ENCODE measurements at regions of chr1 and their contacts with region 1.

Region 1: DNA sequence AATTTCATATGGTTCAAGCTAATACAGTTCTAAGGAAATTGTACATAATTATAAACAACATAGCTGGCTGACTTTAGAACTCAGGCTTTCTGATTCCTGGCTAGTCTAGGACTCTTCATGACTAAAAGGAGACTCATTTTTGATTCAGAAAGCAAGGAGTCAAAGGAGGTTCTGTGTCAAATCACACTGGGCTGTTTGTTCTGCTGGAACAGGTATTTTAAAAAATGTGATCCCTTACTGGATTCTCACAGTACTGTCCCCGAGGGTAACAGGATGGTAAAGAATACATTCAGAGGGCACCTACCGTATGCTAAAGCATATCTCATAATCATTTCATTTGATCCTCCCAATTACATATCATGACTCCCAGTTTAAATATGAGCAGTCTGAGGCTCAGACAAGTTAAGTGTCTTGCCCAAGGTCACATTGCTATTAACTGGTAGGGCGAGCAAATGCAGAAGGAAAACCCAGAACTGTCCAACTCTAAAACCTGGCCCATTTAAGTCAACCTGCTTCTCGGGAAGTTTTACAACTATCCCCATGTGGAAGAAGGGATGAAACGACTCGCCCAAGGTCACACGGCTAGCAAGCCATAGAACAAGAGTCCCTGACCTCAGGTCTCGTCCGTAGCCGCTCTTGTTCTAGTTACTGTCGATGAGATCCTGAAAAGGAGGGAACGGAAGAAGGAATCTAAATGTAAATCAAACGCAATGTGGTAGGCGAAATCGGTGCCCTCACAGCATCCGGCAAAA is 675 bp downstream of the MYSM1 start:
- DNase-seq: no peak
- H3K4me3 ChIP-seq: peak overlapping the region; percentile 59 to 100 (median 97)
- H3K27ac ChIP-seq: peak overlapping the region; percentile 90
- H3K4me1 ChIP-seq: peaks cover 5 to 12% (median 9%) of the 10 kb centered on the region in 4 experiments
- H3K27me3 ChIP-seq: no peaks in the 10 kb centered on the region
- CTCF ChIP-seq: no peak
- EP300 ChIP-seq: no peak
- POLR2A ChIP-seq: no peak
- RAD21 ChIP-seq: no peak

Region 2: DNA sequence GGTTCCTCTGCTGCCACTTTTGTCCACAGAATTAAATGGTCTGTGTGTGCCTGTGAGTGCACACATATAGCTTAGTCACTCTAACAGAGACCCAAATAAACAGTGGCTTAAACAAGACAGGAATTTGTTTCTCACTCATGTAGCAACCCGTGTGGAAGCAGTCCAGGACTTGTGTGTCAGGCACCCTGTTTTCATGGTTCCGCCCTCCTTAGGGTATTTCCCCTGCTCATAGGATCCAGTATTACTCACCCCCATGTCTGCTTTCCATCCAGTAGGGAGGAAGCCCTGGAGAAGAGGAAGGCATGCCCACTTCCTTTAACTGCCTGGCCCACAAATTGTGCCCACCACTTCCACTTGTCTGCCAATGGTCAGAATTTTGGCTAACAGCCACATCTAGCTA is 80.9 kb before region 1 on chr1:
- CTCF ChIA-PET with region 1: no interaction called
- POLR2A ChIA-PET with region 1: no interaction called
- DNase-seq: no peak
- H3K4me3 ChIP-seq: no peak overlapping the region
- H3K27ac ChIP-seq: no peak overlapping the region
- H3K4me1 ChIP-seq: peaks cover 0 to 11% (median 3%) of the 10 kb centered on the region in 4 experiments; a peak in 5 of 7 replicates
- H3K27me3 ChIP-seq: no peaks in the 10 kb centered on the region
- CTCF ChIP-seq: no peak
- EP300 ChIP-seq: no peak
- POLR2A ChIP-seq: no peak
- RAD21 ChIP-seq: no peak

Region 3: GRCh38 chr1:58687516-58687915 is 11.7 kb before region 1 on chr1:
- CTCF ChIA-PET with region 1: interaction called, 5 read pairs
- POLR2A ChIA-PET with region 1: interaction called, 19 read pairs
- DNase-seq: no peak
- H3K4me3 ChIP-seq: no peak overlapping the region
- H3K27ac ChIP-seq: no peak overlapping the region
- H3K4me1 ChIP-seq: no peaks in the 10 kb centered on the region; a peak in 1 of 7 replicates
- H3K27me3 ChIP-seq: no peaks in the 10 kb centered on the region
- CTCF ChIP-seq: no peak
- EP300 ChIP-seq: no peak
- POLR2A ChIP-seq: no peak
- RAD21 ChIP-seq: no peak

Region 4: GRCh38 chr1:58816072-58816746 is 117.0 kb after region 1 on chr1:
- CTCF ChIA-PET with region 1: no interaction called
- POLR2A ChIA-PET with region 1: no interaction called
- DNase-seq: peak in 1 of 2 experiments; percentile 82
- H3K4me3 ChIP-seq: peak overlapping the region; percentile 37 to 70 (median 59)
- H3K27ac ChIP-seq: no peak overlapping the region
- H3K4me1 ChIP-seq: peaks cover 6 to 12% (median 6%) of the 10 kb centered on the region in 4 experiments; a peak in 5 of 7 replicates
- H3K27me3 ChIP-seq: peaks cover 0 to 22% (median 14%) of the 10 kb centered on the region in 4 experiments; a peak in 6 of 7 replicates
- CTCF ChIP-seq: peak in 1 of 3 experiments; percentile 11; a peak in 1 of 4 replicates
- EP300 ChIP-seq: 0 out of 3 replicates have a peak, but pooled peaks of 1 of the 2 experiments have one; percentile 60
- POLR2A ChIP-seq: 0 out of 3 replicates have a peak, but pooled peaks of 1 of the 2 experiments have one; percentile 39
- RAD21 ChIP-seq: peak in 1 of 2 experiments; percentile 6; a peak in 2 of 4 replicates